Activated T-helper 2 cell treated with anti-CD3 and anti-CD28 coated beads, Interferon-gamma antibody, Interleukin-2, Interleukin-4, amounts not matched to agents 10 μg/mL and 5 μg/mL and 100 μg/mL, durations not matched to agents 14 hours and 24 hours and 36 hours (primary cell): ENCODE measurements at regions of chr6 and their contacts with region 1.

Region 1: DNA sequence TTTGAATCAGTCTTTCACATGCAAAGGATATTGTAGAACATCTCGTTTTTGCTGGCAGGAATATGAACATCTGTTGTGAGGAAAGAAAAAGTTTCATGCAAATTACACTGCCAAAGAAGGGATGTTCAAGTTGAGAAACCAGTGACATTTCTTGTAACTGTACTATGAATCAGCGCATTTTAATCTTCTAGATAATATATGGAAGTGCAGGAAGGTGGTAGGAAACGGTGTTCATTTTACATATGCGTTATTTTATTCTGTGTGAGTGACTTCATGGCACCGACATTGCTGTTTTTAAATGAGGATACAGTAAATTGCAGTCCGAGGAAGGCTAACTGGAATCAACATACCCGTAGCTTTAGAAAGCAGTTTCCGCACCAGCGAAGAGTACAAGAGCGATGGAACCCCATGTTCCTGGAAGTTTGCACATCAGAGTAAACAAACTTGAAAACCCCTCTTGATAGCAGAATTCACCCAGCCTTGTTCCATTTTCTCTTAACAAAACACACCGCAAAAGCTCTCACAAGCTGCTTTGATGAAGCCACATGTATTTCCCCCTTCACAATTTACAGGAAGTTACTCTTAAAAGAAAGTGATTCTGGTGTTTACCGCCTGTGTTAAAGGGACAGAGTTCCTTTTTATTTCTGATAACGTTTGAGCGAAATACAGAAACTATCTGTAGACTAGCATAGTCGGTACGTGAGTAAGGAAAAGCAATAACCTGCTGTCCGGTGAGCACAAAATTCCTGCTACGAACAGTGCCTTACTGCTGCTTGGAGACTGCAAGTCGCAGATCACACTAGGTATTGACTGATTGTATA is 11.5 kb downstream of the PRDM1 start:
- DNase-seq: peak; percentile 61
- H3K4me3 Mint-ChIP-seq: peak overlapping the region; percentile 95
- H3K27ac Mint-ChIP-seq: peak overlapping the region; percentile 98
- H3K4me1 Mint-ChIP-seq: peaks cover 69% of the 10 kb centered on the region
- H3K27me3 Mint-ChIP-seq: no peaks in the 10 kb centered on the region

Region 2: DNA sequence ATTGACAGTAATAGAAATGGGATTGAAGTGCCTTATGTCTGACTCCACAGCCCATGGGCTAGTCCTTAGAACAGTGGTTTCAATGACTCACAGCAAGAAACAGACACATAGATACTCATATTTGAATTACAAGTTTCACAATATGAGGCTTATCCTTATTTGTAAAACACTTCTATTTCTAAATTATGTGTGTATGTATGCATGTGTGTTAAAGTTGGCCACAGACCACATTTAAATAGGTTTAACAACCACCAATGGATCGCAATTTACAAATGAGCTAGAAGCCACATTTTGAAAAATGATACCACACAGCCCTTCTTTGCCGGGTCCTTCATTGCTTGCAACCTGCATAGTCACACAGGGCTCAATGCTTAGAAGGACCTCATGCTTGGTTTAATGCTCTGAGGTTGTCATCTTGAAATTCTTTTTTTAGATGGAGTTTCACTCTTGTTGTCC is 537.0 kb before region 1 on chr6:
- intact Hi-C with region 1: loop called (anchors 5 kb)
- DNase-seq: no peak
- H3K4me3 Mint-ChIP-seq: no peak overlapping the region
- H3K27ac Mint-ChIP-seq: peak overlapping the region; percentile 33
- H3K4me1 Mint-ChIP-seq: peaks cover 20% of the 10 kb centered on the region
- H3K27me3 Mint-ChIP-seq: peaks cover 6% of the 10 kb centered on the region

Region 3: DNA sequence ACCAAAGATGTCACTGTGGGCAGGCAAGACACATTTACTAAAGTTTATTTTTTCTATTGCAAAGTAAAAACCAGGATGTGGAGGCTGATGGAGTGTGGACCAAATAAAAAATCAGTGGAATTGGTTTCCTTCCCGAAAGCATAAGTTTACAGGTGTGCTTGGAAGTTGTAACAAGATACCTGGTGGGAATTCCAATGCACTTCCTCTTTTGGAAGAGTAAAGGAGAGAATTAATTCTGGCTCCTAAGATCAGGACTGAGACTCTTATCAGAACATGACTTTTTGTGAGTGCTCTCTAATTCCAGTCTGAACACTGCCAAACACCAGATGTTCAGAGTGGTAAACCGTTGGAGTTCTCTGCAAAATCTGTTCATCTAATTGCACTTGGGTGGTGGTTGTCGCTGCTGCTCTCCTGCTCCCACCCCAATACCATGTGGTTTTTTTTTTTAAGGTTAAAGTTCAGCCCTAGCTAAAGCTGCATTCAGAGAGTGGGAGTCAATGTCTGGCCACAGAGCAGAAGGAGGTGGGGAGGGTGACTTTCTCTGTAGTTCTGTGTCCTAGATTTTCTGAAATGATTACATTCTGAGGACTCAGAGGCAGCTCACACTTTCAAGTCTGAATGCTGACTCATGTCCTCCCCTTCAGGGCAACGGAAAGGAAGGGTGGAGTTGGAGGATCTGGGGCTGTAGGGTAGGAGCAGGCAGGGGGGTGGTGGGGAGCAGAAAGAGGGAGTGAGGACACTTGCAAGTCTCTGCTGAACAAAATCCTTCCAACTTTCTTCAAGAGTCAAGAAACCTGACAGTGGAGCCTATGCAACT is 287.3 kb before region 1 on chr6:
- intact Hi-C with region 1: loop called (anchors 1 kb)
- DNase-seq: peak; percentile 70
- H3K4me3 Mint-ChIP-seq: peak overlapping the region; percentile 39
- H3K27ac Mint-ChIP-seq: peak overlapping the region; percentile 78
- H3K4me1 Mint-ChIP-seq: peaks cover 64% of the 10 kb centered on the region
- H3K27me3 Mint-ChIP-seq: no peaks in the 10 kb centered on the region

Region 4: GRCh38 chr6:105851113-105851580 is 246.5 kb before region 1 on chr6:
- intact Hi-C with region 1: no loop called
- DNase-seq: no peak
- H3K4me3 Mint-ChIP-seq: no peak overlapping the region
- H3K27ac Mint-ChIP-seq: no peak overlapping the region
- H3K4me1 Mint-ChIP-seq: no peaks in the 10 kb centered on the region
- H3K27me3 Mint-ChIP-seq: peaks cover 2% of the 10 kb centered on the region

Region 5: DNA sequence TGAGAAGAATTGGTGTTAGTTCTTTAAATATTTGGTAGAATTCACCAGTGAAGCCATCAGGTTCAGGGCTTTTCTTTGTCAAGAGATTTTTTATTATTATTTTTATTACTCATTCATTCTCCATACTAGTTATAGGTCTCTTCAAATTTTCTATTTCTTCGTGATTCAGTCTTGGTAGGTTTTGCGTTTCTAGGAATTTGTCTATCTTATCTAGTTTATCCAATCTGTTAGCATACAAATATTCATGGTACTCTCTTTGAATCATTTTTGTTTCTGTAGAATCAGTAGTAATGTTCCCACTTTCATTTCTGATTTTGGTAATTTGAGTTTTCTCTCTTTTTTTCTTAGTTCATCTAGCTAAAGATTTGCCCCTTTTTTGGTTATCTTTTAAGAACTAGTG is 63.8 kb before region 1 on chr6:
- intact Hi-C with region 1: loop called (anchors 5 kb)
- DNase-seq: no peak
- H3K4me3 Mint-ChIP-seq: no peak overlapping the region
- H3K27ac Mint-ChIP-seq: no peak overlapping the region
- H3K4me1 Mint-ChIP-seq: peaks cover 23% of the 10 kb centered on the region
- H3K27me3 Mint-ChIP-seq: no peaks in the 10 kb centered on the region

Region 6: GRCh38 chr6:106141441-106142237 is 44.0 kb after region 1 on chr6:
- intact Hi-C with region 1: loop called (anchors 1 kb)
- DNase-seq: peak; percentile 35
- H3K4me3 Mint-ChIP-seq: peak overlapping the region; percentile 55
- H3K27ac Mint-ChIP-seq: peak overlapping the region; percentile 98
- H3K4me1 Mint-ChIP-seq: peaks cover 63% of the 10 kb centered on the region
- H3K27me3 Mint-ChIP-seq: no peaks in the 10 kb centered on the region

Region 7: GRCh38 chr6:106223300-106223930 is 125.8 kb after region 1 on chr6:
- intact Hi-C with region 1: loop called (anchors 1 kb)
- DNase-seq: peak; percentile 48
- H3K4me3 Mint-ChIP-seq: no peak overlapping the region
- H3K27ac Mint-ChIP-seq: no peak overlapping the region
- H3K4me1 Mint-ChIP-seq: peaks cover 44% of the 10 kb centered on the region
- H3K27me3 Mint-ChIP-seq: no peaks in the 10 kb centered on the region

Region 8: GRCh38 chr6:106519460-106520394 is 422.1 kb after region 1 on chr6:
- intact Hi-C with region 1: loop called (anchors 2 kb)
- DNase-seq: peak; percentile 79
- H3K4me3 Mint-ChIP-seq: peak overlapping the region; percentile 90
- H3K27ac Mint-ChIP-seq: peak overlapping the region; percentile 97
- H3K4me1 Mint-ChIP-seq: peaks cover 57% of the 10 kb centered on the region
- H3K27me3 Mint-ChIP-seq: no peaks in the 10 kb centered on the region

Region 9: GRCh38 chr6:106608062-106608668 is 510.5 kb after region 1 on chr6:
- intact Hi-C with region 1: no loop called
- DNase-seq: peak; percentile 18
- H3K4me3 Mint-ChIP-seq: no peak overlapping the region
- H3K27ac Mint-ChIP-seq: no peak overlapping the region
- H3K4me1 Mint-ChIP-seq: peaks cover 29% of the 10 kb centered on the region
- H3K27me3 Mint-ChIP-seq: no peaks in the 10 kb centered on the region